ENCODE measurements at regions of chr3 and their contacts with region 1.

Region 1: GRCh38 chr3:3179407-3180094 is at the start of gene CRBN:
- DNase-seq: peak; percentile 82 to 94 (median 91)
- H3K4me3 ChIP-seq: peak within 1 kb of the TSS; percentile 74 to 100 (median 98)
- H3K27ac ChIP-seq: peak within 1 kb of the TSS in 57 of 59 donors; percentile 27 to 94 (median 81)
- H3K27me3 ChIP-seq: no peaks in the 10 kb centered on the region
- CTCF ChIP-seq: peak; percentile 94 to 100 (median 99)
- total RNA-seq, gene CRBN: 83.9 to 140 (median 113) TPM

Region 2: DNA sequence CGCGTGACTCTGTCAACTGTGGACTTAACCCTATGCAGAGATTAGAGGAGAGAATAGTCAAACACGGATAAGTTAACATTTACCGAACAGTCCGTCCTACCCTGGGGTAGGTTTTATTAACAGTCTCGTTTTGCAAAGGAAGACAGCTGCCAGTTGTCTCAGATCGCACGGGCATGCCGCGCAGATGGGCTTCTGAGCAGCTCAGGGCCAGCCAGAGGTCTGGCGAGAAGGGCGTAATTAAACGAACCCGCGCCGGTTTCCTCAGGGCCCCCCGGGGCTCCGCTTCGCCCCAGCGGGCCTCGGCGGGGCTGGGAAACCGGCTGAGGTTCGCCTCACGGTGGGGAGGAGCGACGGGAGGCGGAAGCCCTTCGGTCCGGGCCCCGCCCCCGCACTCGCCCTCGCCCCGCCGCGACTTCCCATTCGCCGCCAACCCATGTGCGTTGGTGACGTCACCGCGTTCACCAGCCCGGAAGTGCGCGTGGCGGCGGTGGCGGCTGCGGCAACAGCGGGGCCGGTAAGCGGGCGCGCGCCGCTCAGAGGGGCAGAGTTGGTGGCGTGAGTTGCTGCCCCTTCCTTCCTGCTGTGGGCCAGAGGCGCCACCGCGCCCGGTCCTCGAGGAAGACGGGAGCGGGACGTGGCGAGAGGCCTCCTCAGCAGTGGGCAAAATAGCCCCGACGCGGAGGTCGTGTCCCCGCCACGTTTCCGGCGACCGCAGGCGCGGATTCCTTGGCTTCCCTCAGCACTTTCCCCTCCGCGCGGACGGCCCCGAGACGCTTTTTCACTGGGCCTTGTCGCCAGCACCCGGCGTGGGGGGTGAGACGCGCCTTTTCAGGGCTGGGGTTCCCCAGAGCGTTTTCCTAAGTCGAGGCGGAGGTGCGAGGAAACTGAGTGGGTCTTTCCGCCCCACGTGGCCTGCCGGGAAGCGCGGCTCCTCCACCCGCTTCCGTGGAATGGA is 52.8 kb before region 1 on chr3 and contains the start of gene TRNT1:
- intact Hi-C with region 1: loop called (anchors 2 to 5 kb)
- DNase-seq: peak; percentile 90 to 97 (median 94)
- H3K4me3 ChIP-seq: peak within 1 kb of the TSS; percentile 65 to 100 (median 96)
- H3K27ac ChIP-seq: peak within 1 kb of the TSS in 58 of 59 donors; percentile 50 to 97 (median 90)
- H3K27me3 ChIP-seq: no peaks in the 10 kb centered on the region
- CTCF ChIP-seq: peak in 27 of 56 donors; percentile 5 to 50 (median 24)
- total RNA-seq, gene TRNT1: 16.2 to 39.4 (median 26.2) TPM

Region 3: DNA sequence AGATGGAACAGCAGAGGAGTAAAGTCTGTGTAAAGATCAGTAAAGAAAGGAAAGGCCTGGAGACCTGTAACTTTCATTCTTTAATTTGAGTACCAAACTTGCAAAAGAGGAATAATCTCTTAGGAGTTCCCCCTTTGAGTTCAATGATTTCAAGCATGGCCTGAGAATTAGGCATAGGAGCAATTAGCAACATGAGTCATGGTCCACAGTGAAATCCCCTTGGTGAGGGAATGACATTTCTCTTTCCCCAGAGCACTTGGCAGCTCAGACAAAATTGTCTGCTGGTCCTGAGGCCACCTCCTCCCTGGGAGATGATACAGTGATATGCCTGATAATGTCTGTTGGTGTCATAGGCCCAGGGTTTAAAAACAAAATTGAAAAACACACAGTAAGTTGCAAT is 81.3 kb after region 1 on chr3:
- intact Hi-C with region 1: no loop called
- DNase-seq: no peak
- H3K4me3 ChIP-seq: no peak overlapping the region
- H3K27ac ChIP-seq: no peak overlapping the region
- H3K27me3 ChIP-seq: no peaks in the 10 kb centered on the region
- CTCF ChIP-seq: no peak